ENCODE measurements at regions of chr1 and their contacts with region 1.

Region 1: GRCh38 chr1:31639543-31639942 is 5.1 kb downstream of the PEF1 start:
- DNase-seq: no peak
- H3K4me3 Mint-ChIP-seq: no peak overlapping the region
- H3K27ac Mint-ChIP-seq: no peak overlapping the region
- H3K4me1 Mint-ChIP-seq: peaks cover 21% of the 10 kb centered on the region
- H3K27me3 Mint-ChIP-seq: no peaks in the 10 kb centered on the region

Region 2: GRCh38 chr1:31617917-31618660 is 21.5 kb before region 1 on chr1:
- CTCF ChIA-PET with region 1: interaction called, 10 read pairs
- POLR2A ChIA-PET with region 1: interaction called, 5 read pairs
- DNase-seq: peak; percentile 32
- H3K4me3 Mint-ChIP-seq: no peak overlapping the region
- H3K27ac Mint-ChIP-seq: no peak overlapping the region
- H3K4me1 Mint-ChIP-seq: peaks cover 2% of the 10 kb centered on the region
- H3K27me3 Mint-ChIP-seq: peaks cover 30% of the 10 kb centered on the region